G401 (cell line): ENCODE measurements at regions of chr12 and their contacts with region 1.

Region 1: DNA sequence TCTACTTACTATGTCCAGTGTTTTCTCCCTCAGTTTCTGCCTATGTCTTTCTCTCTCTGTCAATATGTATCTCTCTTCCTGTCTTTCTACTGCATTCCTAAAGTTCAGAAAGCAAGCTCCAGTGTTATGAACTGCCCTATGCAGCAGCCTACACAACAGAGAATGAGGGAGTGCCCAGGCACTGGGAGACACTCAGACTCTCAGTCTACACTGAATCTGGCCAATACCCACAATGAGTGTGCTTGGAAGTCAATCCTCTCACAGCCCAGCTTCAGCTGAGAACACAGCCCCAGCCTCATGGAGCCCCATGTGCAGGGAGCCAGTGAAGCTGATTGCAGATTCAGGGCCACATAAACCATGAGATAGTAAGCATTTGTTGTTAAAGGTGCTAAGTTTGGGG is 128.7 kb downstream of the ALG10 start:
- DNase-seq: no peak

Region 2: GRCh38 chr12:34591966-34592365 is 440.9 kb after region 1 on chr12:
- in situ Hi-C with region 1: loop called (anchors 10 kb)
- DNase-seq: no peak